Right ventricle myocardium inferior (tissue), 1 donor: ENCODE measurements at regions of chr1 and their contacts with region 1.

Region 1: GRCh38 chr1:224047538-224047937 is 66.4 kb upstream of the FBXO28 start:
- DNase-seq: no peak
- ATAC-seq: no peak

Region 2: DNA sequence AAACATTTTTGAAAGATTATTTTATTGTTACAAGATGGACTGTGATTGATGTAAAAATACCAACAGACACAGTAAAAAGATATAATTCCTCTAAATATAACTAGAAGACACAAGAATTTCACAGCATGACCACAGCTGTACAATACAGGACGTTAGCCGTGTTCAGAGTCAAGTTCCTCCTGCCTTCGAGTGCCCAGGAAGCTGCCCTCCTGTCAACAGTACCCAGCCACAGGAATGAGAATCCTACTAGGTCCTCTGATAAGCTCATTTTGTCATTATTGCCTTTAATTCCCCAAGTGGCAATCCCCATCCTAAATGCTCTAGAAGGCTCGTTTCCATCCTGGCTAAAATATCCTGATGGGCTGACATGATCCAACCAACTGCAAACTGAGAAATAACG is 351.6 kb before region 1 on chr1:
- intact Hi-C with region 1: loop called (anchors 5 kb)
- DNase-seq: no peak
- ATAC-seq: no peak

Region 3: GRCh38 chr1:224092601-224093000 is 45.1 kb after region 1 on chr1:
- intact Hi-C with region 1: no loop called
- DNase-seq: no peak
- ATAC-seq: no peak